ENCODE measurements at regions of chr1 and their contacts with region 1.

Region 1: DNA sequence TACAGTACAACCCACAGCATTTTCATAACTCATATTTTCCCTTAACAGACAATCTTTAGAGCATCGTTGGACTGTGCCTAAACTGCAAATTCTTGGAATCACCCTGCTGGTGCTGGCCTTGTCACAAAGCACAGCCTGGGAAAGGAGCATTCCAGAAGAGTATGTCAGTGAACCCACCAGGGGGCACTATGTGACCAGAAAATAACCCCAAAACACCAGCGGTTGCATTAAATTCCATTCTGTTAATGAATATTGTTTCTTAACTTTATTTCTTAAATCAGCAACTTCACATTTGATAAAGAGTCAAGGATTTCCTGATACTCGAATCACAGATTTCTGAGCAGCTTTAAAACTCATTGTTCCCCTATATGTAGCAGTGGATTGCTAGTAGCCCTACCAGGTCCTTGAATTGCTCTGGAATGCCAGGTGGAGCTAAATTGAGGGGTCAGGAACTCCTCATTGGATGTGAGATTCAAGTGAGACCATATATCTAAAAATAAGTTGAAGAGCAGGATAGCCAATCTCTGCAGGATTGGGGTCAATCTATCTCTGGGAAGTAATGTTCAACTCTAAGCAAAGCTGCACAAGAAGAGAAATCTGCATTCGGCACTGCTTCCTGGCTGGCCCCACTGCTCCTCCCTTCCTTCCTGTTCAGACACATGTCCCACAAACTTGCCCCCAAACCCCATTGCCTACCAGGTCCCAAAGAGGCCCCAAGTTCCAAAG is 12.7 kb upstream of the RAB4A start:
- H3K4me3 Mint-ChIP-seq: no peak overlapping the region
- H3K27ac Mint-ChIP-seq: peak overlapping the region; percentile 43
- H3K4me1 Mint-ChIP-seq: peaks cover 8% of the 10 kb centered on the region
- H3K27me3 Mint-ChIP-seq: no peaks in the 10 kb centered on the region

Region 2: DNA sequence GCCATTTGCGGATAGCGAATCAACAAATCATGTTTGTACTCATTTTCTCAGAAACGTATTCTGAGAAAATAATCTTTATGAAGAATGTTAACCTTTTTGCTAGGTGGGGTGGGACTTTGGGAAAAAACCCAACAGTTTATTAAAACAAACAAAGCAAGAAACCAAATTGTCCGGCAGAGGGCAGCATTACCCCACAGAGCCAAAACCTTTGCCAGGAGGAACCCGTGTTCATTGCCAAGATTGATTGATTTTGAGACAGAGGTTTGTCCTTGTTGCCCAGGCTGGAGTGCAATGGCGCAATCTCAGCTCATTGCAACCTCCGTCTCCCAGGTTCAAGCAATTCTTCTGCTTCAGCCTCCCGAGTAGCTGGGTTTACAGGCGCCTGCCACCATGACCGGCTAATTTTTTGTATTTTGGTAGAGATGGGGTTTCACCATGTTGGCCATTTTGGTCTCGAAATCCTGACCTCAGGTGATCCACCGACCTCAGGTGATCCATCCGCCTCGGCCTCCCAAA is 593.7 kb before region 1 on chr1:
- intact Hi-C with region 1: loop called (anchors 10 kb)
- H3K4me3 Mint-ChIP-seq: no peak overlapping the region
- H3K27ac Mint-ChIP-seq: no peak overlapping the region
- H3K4me1 Mint-ChIP-seq: peaks cover 7% of the 10 kb centered on the region
- H3K27me3 Mint-ChIP-seq: peaks cover 20% of the 10 kb centered on the region

Region 3: DNA sequence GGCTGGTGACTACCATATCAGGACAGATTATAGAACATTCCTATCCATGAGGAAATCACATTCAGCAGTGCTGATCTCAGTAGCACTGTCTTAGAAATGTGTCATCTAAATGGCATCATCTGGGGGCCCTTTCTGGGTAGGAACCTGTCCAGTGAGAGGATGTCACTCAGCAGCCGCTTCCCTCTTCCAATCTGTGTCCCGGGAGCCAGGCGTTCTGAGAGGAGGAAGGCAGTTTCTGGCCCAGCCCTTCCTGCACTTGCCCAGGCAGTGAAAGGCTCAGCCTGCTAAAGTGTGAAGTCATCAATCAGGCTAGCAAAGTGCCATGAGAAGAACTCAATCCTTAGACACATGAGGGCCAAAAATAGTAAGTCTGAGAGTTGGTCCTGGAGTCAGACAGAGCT is 38.3 kb after region 1 on chr1:
- intact Hi-C with region 1: no loop called
- H3K4me3 Mint-ChIP-seq: no peak overlapping the region
- H3K27ac Mint-ChIP-seq: no peak overlapping the region
- H3K4me1 Mint-ChIP-seq: no peaks in the 10 kb centered on the region
- H3K27me3 Mint-ChIP-seq: no peaks in the 10 kb centered on the region

Region 4: GRCh38 chr1:229452956-229453801 is 195.0 kb after region 1 on chr1:
- intact Hi-C with region 1: loop called (anchors 10 kb)
- H3K4me3 Mint-ChIP-seq: no peak overlapping the region
- H3K27ac Mint-ChIP-seq: no peak overlapping the region
- H3K4me1 Mint-ChIP-seq: no peaks in the 10 kb centered on the region
- H3K27me3 Mint-ChIP-seq: no peaks in the 10 kb centered on the region

Region 5: GRCh38 chr1:229479660-229480399 is 221.6 kb after region 1 on chr1:
- intact Hi-C with region 1: loop called (anchors 1 kb)
- H3K4me3 Mint-ChIP-seq: no peak overlapping the region
- H3K27ac Mint-ChIP-seq: peak overlapping the region; percentile 2
- H3K4me1 Mint-ChIP-seq: peaks cover 11% of the 10 kb centered on the region
- H3K27me3 Mint-ChIP-seq: no peaks in the 10 kb centered on the region

Region 6: DNA sequence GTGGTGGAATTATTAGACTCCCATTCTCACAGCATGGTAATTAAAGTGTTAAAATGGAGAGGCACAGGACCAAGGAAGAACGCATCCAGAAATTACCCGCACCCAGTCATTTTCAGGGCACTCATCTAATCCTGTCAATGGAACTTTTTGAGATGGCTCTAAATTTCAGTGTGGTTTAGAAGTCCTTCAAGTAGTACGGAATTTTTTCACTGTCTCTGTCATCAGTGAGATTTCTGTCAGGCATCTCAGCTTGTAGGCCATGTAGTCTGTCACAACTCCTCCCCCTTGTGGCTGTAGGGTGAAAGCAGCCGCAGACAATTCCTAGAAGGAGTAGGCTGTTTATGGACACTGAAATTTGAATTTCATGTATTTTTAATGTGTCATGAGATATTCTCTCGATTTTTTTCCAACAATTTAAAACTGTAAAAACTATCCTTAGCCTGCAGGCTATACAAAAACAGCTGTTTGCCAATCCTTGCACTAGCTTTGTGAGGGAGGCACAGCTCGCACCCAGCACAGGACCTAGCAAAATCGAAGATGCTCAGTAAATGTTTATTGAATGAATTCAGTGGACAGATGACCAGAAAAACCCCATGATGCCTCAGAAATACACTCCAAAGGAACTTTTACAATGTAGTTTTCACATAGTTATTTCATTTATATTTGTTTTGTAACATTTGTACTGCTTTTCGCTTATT is 256.5 kb after region 1 on chr1:
- intact Hi-C with region 1: loop called (anchors 1 kb)
- H3K4me3 Mint-ChIP-seq: no peak overlapping the region
- H3K27ac Mint-ChIP-seq: no peak overlapping the region
- H3K4me1 Mint-ChIP-seq: no peaks in the 10 kb centered on the region
- H3K27me3 Mint-ChIP-seq: peaks cover 2% of the 10 kb centered on the region

Measured in dendritic cell treated with granulocyte-macrophage colony-stimulating factor and Interleukin-4, amounts not matched to agents 40 ng/mL and 50 ng/mL, for 4 days (primary cell).